B cell (primary cell): ENCODE measurements at regions of chr1 and their contacts with region 1.

Region 1: GRCh38 chr1:161132410-161133219 is at the start of gene DEDD:
- DNase-seq: peak; percentile 96
- ATAC-seq: peak; percentile 91
- H3K4me3 ChIP-seq: peak within 1 kb of the TSS; percentile 85 to 100 (median 92)
- H3K4me3 Mint-ChIP-seq: no peak within 1 kb of the TSS
- H3K27ac ChIP-seq: peak within 1 kb of the TSS; percentile 83 to 89
- H3K27ac Mint-ChIP-seq: no peak within 1 kb of the TSS
- H3K4me1 ChIP-seq: peaks cover 18 to 27% of the 10 kb centered on the region in 2 donors
- H3K4me1 Mint-ChIP-seq: peaks cover 41% of the 10 kb centered on the region
- H3K27me3 ChIP-seq: no peaks in the 10 kb centered on the region
- H3K27me3 Mint-ChIP-seq: no peaks in the 10 kb centered on the region
- CTCF ChIP-seq: no peak
- total RNA-seq, gene DEDD: 40.8 and 46.0 TPM in 2 replicates

Region 2: GRCh38 chr1:160837558-160838205 is 294.9 kb before region 1 on chr1:
- CTCF ChIA-PET with region 1: interaction called, 3 read pairs
- POLR2A ChIA-PET with region 1: no interaction called
- intact Hi-C with region 1: loop called (anchors 2 kb)
- DNase-seq: peak; percentile 91
- ATAC-seq: peak; percentile 97
- H3K4me3 ChIP-seq: peak overlapping the region in 1 of 5 experiments; percentile 30
- H3K4me3 Mint-ChIP-seq: peak overlapping the region; percentile 41
- H3K27ac ChIP-seq: peak overlapping the region; percentile 71 to 72
- H3K27ac Mint-ChIP-seq: peak overlapping the region; percentile 90
- H3K4me1 ChIP-seq: peaks cover 33 to 34% of the 10 kb centered on the region in 2 donors
- H3K4me1 Mint-ChIP-seq: peaks cover 41% of the 10 kb centered on the region
- H3K27me3 ChIP-seq: no peaks in the 10 kb centered on the region
- H3K27me3 Mint-ChIP-seq: no peaks in the 10 kb centered on the region
- CTCF ChIP-seq: peak; percentile 65

Region 3: GRCh38 chr1:161071886-161072371 is 60.7 kb before region 1 on chr1:
- CTCF ChIA-PET with region 1: interaction called, 82 read pairs
- POLR2A ChIA-PET with region 1: interaction called, 8 read pairs
- intact Hi-C with region 1: loop called (anchors 5 kb)
- DNase-seq: peak; percentile 71
- ATAC-seq: no peak
- H3K4me3 ChIP-seq: no peak overlapping the region
- H3K4me3 Mint-ChIP-seq: no peak overlapping the region
- H3K27ac ChIP-seq: no peak overlapping the region
- H3K27ac Mint-ChIP-seq: peak overlapping the region; percentile 12
- H3K4me1 ChIP-seq: peaks cover 20 to 35% of the 10 kb centered on the region in 2 donors
- H3K4me1 Mint-ChIP-seq: peaks cover 37% of the 10 kb centered on the region
- H3K27me3 ChIP-seq: no peaks in the 10 kb centered on the region
- H3K27me3 Mint-ChIP-seq: no peaks in the 10 kb centered on the region
- CTCF ChIP-seq: peak; percentile 81

Region 4: DNA sequence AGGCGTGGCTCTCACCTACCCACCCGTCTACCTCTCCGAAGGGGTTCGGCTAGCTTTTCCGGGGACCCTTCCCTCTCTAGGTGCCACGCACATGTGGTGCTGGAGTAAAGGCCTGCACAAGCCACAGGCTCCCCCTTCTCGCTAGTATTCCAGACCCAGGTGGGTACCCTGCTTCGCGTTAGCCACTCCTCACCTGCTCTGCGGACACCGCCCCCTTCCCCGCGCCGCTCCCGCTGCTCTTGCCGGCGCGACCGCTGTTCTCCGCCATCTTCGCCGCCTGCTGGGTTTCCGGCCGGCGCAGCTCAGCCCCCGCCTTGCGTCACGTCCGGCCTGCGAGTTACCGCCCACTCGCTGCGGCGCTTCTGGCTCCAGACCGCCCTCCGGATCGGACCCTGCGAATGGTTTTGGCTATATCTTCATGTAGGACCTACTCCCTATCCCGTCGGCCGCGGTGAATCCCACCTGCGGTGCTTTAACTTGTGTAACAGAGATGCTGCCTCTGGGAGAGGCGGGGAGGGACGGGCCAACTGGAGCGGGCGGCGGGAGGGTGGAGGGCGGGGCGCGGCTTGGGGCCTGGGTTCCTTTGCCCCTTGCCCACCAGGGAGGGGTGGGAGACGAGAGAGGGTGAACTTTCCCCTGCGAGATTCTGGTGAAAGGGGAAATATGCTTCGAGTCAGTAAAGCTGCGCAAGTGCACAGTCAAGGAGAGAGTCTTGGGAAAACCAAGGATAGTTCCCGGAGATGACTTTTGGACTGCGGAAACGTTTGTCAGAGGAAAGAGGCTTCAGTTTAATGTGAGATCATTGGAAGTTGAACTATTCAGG is 14.6 kb before region 1 on chr1 and contains the starts of genes NIT1 and PFDN2:
- CTCF ChIA-PET with region 1: interaction called, 6 read pairs
- POLR2A ChIA-PET with region 1: interaction called, 12 read pairs
- intact Hi-C with region 1: loop called (anchors 1 kb)
- DNase-seq: peak; percentile 90
- ATAC-seq: peak; percentile 84
- H3K4me3 ChIP-seq: peak within 1 kb of the TSS; percentile 71 to 98 (median 97)
- H3K4me3 Mint-ChIP-seq: peak within 1 kb of the TSS; percentile 97
- H3K27ac ChIP-seq: peak within 1 kb of the TSS; percentile 86 to 89
- H3K27ac Mint-ChIP-seq: peak within 1 kb of the TSS; percentile 94
- H3K4me1 ChIP-seq: peaks cover 45 to 54% of the 10 kb centered on the region in 2 donors
- H3K4me1 Mint-ChIP-seq: peaks cover 78% of the 10 kb centered on the region
- H3K27me3 ChIP-seq: no peaks in the 10 kb centered on the region
- H3K27me3 Mint-ChIP-seq: no peaks in the 10 kb centered on the region
- CTCF ChIP-seq: no peak
- total RNA-seq, gene NIT1: 53.5 and 56.1 TPM in 2 replicates
- total RNA-seq, gene PFDN2: 29.9 and 32.3 TPM in 2 replicates

Region 5: DNA sequence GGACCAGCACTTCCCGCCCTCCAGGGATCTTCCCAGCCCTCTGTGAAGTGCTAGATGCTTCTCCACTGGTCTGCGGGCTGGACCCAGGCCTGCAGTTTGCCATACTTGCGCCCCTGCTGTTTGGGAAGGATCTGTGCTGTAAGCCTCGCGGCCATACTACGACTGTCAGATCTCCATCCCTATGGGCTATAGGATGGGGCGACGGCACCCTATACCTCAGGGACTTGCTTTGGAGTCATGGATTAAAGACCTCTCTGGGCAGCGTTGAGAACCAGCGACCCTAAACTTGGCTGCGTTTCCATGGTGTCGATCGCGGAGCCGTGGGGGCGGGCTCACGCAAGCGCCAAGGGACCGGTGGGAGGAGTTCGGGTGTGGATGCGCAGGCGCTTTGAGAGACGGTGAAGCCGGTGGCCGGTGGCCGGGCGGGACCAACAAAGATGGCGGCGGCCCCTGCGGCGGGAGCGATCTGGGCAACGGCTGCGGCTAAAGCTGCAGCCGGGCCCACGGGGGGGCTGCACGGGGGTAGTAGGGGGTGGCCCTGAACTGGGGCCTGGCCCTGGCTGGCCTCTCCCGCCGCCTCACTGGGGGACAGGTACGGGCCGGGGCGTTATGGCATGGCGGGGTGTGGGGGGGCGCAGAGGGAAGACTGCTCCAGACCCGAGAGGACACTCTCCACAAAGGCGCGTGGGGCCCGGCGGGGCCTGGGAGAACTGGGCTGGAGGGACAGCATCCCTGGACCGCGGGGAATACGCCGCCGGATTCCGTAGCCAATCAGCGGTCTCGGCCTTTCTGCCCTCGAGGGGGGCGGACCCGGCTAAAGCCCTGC is 26.7 kb after region 1 on chr1 and contains the start of gene USP21:
- CTCF ChIA-PET with region 1: interaction called, 7 read pairs
- POLR2A ChIA-PET with region 1: no interaction called
- intact Hi-C with region 1: loop called (anchors 1 kb)
- DNase-seq: peak; percentile 94
- ATAC-seq: peak; percentile 96
- H3K4me3 ChIP-seq: peak within 1 kb of the TSS; percentile 69 to 92 (median 85)
- H3K4me3 Mint-ChIP-seq: peak within 1 kb of the TSS; percentile 92
- H3K27ac ChIP-seq: peak within 1 kb of the TSS; percentile 74 to 76
- H3K27ac Mint-ChIP-seq: peak within 1 kb of the TSS; percentile 93
- H3K4me1 ChIP-seq: peaks cover 31 to 33% of the 10 kb centered on the region in 2 donors
- H3K4me1 Mint-ChIP-seq: peaks cover 55% of the 10 kb centered on the region
- H3K27me3 ChIP-seq: no peaks in the 10 kb centered on the region
- H3K27me3 Mint-ChIP-seq: no peaks in the 10 kb centered on the region
- CTCF ChIP-seq: no peak
- total RNA-seq, gene USP21: 50.2 and 53.3 TPM in 2 replicates

Region 6: DNA sequence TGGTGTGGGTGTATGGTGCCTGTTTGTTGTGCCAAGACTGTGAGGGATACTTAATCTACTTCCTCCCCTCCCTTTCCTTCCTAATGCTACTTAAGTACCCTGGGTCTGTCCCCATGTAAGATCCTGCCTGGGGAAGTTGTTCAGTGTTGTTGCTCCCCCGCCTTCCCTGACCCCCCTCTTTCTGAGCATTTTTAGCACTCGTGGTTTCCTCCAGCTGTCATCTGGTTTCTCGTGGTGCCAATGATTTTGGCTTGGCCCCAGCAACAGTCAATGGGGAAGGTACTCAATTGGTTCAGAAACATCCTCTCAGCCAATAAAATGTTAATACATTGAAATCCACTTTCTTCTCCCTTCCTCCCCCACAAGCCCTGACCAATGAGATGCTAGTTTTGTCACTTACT is 52.7 kb after region 1 on chr1:
- CTCF ChIA-PET with region 1: interaction called, 4 read pairs
- POLR2A ChIA-PET with region 1: no interaction called
- intact Hi-C with region 1: loop called (anchors 1 kb)
- DNase-seq: peak; percentile 91
- ATAC-seq: peak; percentile 76
- H3K4me3 ChIP-seq: peak overlapping the region in 4 of 5 experiments; percentile 31 to 63 (median 36)
- H3K4me3 Mint-ChIP-seq: peak overlapping the region; percentile 71
- H3K27ac ChIP-seq: peak overlapping the region; percentile 86 to 94
- H3K27ac Mint-ChIP-seq: peak overlapping the region; percentile 93
- H3K4me1 ChIP-seq: peaks cover 73 to 93% of the 10 kb centered on the region in 2 donors
- H3K4me1 Mint-ChIP-seq: peaks cover 78% of the 10 kb centered on the region
- H3K27me3 ChIP-seq: no peaks in the 10 kb centered on the region
- H3K27me3 Mint-ChIP-seq: no peaks in the 10 kb centered on the region
- CTCF ChIP-seq: no peak

Region 7: DNA sequence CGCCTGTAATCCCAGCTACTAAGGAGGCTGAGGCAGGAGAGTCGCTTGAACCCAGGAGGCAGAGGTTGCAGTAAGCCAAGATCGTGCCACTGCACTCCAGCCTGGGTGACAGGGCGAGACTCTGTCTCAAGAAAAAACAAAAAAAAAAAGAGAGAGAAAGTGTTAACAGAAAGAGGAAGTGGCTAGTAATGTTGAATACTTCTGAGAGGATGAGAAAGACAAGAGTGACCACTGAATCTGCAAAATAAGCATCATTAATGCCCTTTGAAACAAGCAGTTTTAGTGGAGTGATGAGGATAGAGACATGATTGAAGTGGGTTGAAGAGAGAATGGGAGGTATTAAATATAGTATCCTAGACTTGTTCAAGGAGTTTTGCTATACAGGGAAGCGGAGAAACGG is 165.5 kb after region 1 on chr1:
- CTCF ChIA-PET with region 1: no interaction called
- POLR2A ChIA-PET with region 1: no interaction called
- intact Hi-C with region 1: no loop called
- DNase-seq: no peak
- ATAC-seq: peak; percentile 31
- H3K4me3 ChIP-seq: no peak overlapping the region
- H3K4me3 Mint-ChIP-seq: no peak overlapping the region
- H3K27ac ChIP-seq: no peak overlapping the region
- H3K27ac Mint-ChIP-seq: no peak overlapping the region
- H3K4me1 ChIP-seq: peaks cover 6 to 7% of the 10 kb centered on the region in 2 donors
- H3K4me1 Mint-ChIP-seq: peaks cover 13% of the 10 kb centered on the region
- H3K27me3 ChIP-seq: no peaks in the 10 kb centered on the region
- H3K27me3 Mint-ChIP-seq: no peaks in the 10 kb centered on the region
- CTCF ChIP-seq: no peak